GM10248 (cell line): ENCODE measurements at regions of chr3 and their contacts with region 1.

Region 1: DNA sequence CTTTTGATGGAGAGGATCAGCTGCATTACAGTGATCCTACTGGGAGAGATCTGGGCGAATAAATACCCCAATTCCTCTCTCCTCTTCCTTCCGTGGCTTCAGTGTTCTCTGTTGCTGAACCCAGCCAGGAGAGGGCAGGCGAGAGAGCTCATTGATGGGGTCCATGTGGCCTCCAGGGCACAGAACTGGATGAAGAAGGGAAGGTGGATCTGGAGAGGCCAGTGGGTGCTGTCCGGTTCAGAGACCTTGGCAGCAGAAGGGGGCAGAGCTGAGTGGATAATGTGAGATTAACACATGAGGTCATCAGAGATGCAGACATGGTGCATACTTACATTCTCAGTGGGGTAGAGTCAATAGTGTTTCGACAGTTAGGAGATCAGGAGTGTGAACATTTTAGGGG is 193.6 kb downstream of the CLSTN2 start:
- DNase-seq: peak; percentile 31
- CTCF ChIP-seq: peak; percentile 61

Region 2: DNA sequence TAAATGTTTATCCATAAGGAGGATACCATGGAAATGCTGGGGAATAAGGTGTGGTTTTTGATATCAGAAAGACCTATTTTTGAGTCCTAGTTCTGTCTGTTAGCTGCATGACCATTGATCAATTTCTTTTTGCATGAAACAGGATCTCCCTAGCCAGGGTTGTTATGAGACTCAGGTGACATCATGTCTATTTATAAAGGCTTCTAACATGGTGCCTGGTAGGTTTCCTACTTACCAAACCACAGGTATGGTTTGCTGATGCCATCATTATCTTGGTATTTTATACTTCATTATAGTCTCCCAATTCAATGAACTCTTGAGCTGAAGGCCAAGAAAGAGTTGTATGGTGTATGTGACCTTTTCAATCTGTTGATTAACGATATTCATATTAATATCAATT is 49.7 kb before region 1 on chr3:
- CTCF ChIA-PET with region 1: no interaction called
- POLR2A ChIA-PET with region 1: no interaction called
- DNase-seq: no peak
- CTCF ChIP-seq: no peak

Region 3: GRCh38 chr3:140143367-140144069 is 14.9 kb after region 1 on chr3:
- CTCF ChIA-PET with region 1: interaction called, 26 read pairs
- POLR2A ChIA-PET with region 1: no interaction called
- DNase-seq: no peak
- CTCF ChIP-seq: no peak

Region 4: DNA sequence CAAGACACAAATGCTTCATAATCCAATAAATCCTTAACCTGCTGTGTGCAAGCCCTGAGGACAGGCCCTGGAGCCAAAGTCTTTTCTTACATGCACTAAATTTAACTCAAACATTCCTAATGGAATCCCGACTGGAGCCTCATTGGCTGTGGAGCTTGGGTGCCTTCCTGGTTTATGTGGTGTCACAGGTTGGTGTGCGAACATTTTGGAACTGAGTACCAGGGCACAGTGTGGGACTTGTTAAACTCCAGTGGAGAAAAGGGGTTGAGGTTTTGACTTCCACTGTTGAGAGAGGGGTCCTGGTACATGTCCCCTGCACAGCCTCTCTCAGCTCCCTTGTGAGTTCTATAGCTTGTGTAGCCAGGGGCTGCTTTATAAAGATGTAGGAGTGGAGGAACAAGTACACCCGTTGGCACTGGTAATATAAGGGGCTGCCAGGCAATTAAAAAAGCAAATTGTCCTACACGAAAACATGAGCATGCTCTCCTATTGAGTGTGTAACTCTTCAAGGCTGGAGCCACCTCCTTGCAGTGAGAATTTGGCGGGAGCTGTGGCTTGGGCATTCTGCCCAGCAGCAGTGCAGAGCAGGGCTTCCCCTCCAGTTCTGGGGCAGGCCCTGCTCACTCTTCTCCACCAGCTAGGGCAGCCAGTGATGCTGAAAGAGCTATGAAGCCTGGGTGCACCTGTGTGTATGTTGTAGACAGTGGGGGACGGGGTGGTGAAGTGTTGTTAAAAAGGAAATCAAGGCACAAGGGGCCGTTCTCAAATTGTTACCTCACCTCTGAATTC is 24.4 kb after region 1 on chr3:
- CTCF ChIA-PET with region 1: interaction called, 17 read pairs
- POLR2A ChIA-PET with region 1: no interaction called
- DNase-seq: no peak
- CTCF ChIP-seq: no peak

Region 5: GRCh38 chr3:140170612-140171011 is 42.0 kb after region 1 on chr3:
- CTCF ChIA-PET with region 1: interaction called, 10 read pairs
- POLR2A ChIA-PET with region 1: no interaction called
- DNase-seq: peak; percentile 41
- CTCF ChIP-seq: no peak

Region 6: GRCh38 chr3:140568842-140569520 is 440.4 kb after region 1 on chr3:
- CTCF ChIA-PET with region 1: no interaction called
- POLR2A ChIA-PET with region 1: no interaction called
- DNase-seq: no peak
- CTCF ChIP-seq: no peak

Region 7: GRCh38 chr3:140736863-140737460 is 608.3 kb after region 1 on chr3:
- CTCF ChIA-PET with region 1: interaction called, 12 read pairs
- POLR2A ChIA-PET with region 1: no interaction called
- DNase-seq: peak; percentile 34
- CTCF ChIP-seq: peak; percentile 48

Region 8: DNA sequence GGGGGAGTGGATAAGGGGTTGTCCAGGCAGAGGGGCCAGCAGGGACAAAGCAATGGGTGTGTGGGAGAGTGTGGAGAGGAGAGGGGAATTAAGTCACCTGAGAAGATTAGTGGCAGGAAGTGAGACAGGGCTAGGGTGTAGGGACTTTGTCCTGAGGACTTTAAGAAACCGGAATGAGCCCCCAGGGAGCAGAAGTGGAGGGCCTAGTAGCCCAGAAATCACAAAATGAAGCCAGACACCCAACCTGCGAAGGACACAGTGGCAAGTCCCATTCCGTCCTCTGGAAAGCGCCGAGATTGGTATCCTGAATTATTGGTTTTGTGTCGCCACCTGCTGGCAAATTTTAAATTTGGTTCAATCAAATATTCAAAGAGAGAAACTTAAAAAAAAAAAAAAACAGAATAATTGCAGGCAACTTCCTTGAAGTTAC is 735.0 kb after region 1 on chr3:
- CTCF ChIA-PET with region 1: interaction called, 15 read pairs
- POLR2A ChIA-PET with region 1: no interaction called
- DNase-seq: peak; percentile 39
- CTCF ChIP-seq: peak; percentile 41